ENCODE measurements at regions of chr4 and their contacts with region 1.

Region 1: GRCh38 chr4:17252131-17252530 is 259.8 kb downstream of the QDPR start:
- DNase-seq: no peak
- H3K4me3 ChIP-seq: no peak overlapping the region
- H3K27ac ChIP-seq: no peak overlapping the region
- H3K4me1 ChIP-seq: no peaks in the 10 kb centered on the region
- CTCF ChIP-seq: no peak

Region 2: DNA sequence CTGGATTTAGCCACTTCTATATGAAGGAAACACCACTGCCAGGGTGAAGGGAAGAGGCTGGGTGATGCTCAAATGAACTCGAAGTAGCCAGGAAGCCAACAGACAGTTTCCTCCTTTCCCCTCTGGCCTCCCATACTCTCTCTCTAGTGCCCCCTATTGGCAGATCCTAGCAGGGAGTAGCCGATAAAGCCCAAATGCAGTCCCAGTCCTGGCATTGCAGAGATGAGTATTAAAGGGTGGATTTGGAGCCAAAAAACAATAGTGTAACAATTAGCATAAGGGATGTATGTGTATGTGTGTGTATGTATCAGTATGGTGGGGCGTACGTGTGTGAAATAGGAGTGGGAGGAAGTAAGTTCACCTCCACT is 139.9 kb before region 1 on chr4:
- CTCF ChIA-PET with region 1: no interaction called
- POLR2A ChIA-PET with region 1: no interaction called
- intact Hi-C with region 1: no loop called
- DNase-seq: peak; percentile 25
- H3K4me3 ChIP-seq: no peak overlapping the region
- H3K27ac ChIP-seq: no peak overlapping the region
- H3K4me1 ChIP-seq: no peaks in the 10 kb centered on the region
- CTCF ChIP-seq: peak; percentile 75

Region 3: DNA sequence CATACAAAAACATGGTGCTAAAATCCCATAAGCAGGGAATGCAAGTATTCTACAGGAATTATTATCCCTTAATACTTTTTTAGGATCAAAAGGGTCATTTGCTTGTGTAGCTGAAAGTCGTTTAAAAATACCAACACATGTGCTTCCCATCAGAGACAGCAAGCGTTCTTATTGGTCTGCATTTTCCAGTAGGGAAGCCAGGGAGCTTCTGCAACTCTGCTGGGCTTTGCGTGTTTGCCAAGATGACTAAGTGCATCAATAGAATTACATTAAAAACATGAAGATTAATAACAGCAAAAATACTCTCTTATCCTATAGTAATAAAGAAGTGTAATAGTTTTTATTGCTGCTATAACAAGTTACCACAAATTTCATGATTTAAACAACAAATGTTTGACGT is 148.6 kb after region 1 on chr4:
- CTCF ChIA-PET with region 1: interaction called, 12 read pairs
- POLR2A ChIA-PET with region 1: no interaction called
- intact Hi-C with region 1: no loop called
- DNase-seq: no peak
- H3K4me3 ChIP-seq: no peak overlapping the region
- H3K27ac ChIP-seq: no peak overlapping the region
- H3K4me1 ChIP-seq: no peaks in the 10 kb centered on the region
- CTCF ChIP-seq: no peak

Region 4: DNA sequence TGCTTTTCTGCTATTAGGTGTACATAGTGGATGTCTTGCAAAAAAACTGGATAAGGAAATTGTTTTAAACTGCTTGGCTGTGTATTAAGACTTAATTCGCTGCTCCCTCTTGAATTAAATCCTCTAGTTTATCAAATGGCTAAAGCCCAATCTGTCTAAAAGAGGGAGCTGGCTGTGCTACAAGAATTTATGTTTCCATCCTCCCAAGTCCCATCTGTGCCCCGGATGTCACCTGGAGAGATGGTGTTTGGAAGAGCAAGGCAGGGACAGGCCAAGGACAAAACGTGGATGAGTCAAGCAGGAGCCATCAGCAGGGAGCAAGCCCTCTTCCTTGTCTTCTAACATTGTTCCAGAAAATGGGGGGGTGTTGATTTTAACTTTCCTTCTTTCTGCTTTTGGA is 940.8 kb after region 1 on chr4:
- CTCF ChIA-PET with region 1: no interaction called
- POLR2A ChIA-PET with region 1: no interaction called
- intact Hi-C with region 1: no loop called
- DNase-seq: no peak
- H3K4me3 ChIP-seq: no peak overlapping the region
- H3K27ac ChIP-seq: no peak overlapping the region
- H3K4me1 ChIP-seq: no peaks in the 10 kb centered on the region
- CTCF ChIP-seq: no peak